ENCODE measurements at regions of chr2 and their contacts with region 1.

Region 1: DNA sequence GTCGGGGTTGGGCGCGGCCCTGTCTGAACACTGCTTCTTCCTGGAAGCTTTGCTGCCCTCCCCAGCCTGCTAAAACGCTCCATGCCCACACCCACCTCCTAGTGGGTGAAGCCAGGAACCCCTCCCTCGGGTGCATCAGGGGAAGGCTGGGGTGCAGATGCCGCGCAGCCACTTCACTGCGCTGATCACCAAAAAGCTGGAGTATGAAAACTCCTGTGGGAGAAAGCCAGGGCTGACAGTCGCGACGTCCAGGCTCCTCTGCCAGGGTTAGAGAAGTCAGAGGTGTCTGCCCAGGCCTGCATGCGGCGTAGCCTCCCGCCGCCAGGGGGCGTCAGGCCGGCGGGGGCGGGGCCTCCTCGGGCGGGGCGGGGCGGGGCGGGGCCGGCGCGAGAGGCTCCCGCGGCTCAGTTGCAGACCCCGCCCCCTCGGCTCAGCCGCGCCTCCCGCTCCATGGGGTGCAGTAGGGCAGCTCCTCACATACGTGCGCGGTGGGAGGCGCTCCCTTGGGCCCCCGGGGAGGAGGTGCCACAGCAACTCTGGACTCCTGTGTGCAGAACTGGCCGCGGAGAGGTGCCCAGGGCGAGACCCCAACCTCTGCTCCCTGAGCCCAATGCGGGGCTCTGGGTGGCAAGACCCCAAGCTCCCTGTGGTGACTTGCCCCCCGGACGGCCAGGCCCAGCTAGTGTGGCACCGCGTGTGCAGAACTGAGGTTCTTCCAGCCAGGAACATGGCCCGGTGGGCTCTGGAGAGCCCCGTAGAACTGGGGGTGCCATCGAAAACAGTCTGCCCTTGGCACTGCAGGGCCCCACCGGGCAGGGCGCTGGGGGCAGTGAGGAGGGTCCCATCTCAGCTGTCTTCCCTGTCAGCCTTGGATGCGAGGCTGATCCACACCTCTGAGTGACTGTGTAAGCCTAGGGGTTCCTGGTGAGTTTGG is 1.8 kb upstream of the RNPEPL1 start:
- DNase-seq: peak; percentile 96
- H3K4me3 Mint-ChIP-seq: peak overlapping the region; percentile 92
- H3K27ac Mint-ChIP-seq: peak overlapping the region; percentile 99
- H3K4me1 Mint-ChIP-seq: peaks cover 66% of the 10 kb centered on the region
- H3K27me3 Mint-ChIP-seq: no peaks in the 10 kb centered on the region

Region 2: GRCh38 chr2:240434728-240435456 is 131.6 kb before region 1 on chr2:
- CTCF ChIA-PET with region 1: no interaction called
- intact Hi-C with region 1: loop called (anchors 5 kb)
- DNase-seq: peak; percentile 88
- H3K4me3 Mint-ChIP-seq: peak overlapping the region; percentile 74
- H3K27ac Mint-ChIP-seq: no peak overlapping the region
- H3K4me1 Mint-ChIP-seq: peaks cover 8% of the 10 kb centered on the region
- H3K27me3 Mint-ChIP-seq: peaks cover 20% of the 10 kb centered on the region

Region 3: GRCh38 chr2:240579771-240580614 is 13.5 kb after region 1 on chr2:
- CTCF ChIA-PET with region 1: interaction called, 21 read pairs
- intact Hi-C with region 1: loop called (anchors 1 kb)
- DNase-seq: peak; percentile 83
- H3K4me3 Mint-ChIP-seq: no peak overlapping the region
- H3K27ac Mint-ChIP-seq: peak overlapping the region; percentile 84
- H3K4me1 Mint-ChIP-seq: peaks cover 36% of the 10 kb centered on the region
- H3K27me3 Mint-ChIP-seq: no peaks in the 10 kb centered on the region

Region 4: GRCh38 chr2:240593026-240593702 is 26.7 kb after region 1 on chr2:
- CTCF ChIA-PET with region 1: no interaction called
- intact Hi-C with region 1: no loop called
- DNase-seq: no peak
- H3K4me3 Mint-ChIP-seq: no peak overlapping the region
- H3K27ac Mint-ChIP-seq: no peak overlapping the region
- H3K4me1 Mint-ChIP-seq: peaks cover 11% of the 10 kb centered on the region
- H3K27me3 Mint-ChIP-seq: no peaks in the 10 kb centered on the region

Region 5: GRCh38 chr2:240624950-240625621 is 58.6 kb after region 1 on chr2 and contains the start of gene GPR35:
- CTCF ChIA-PET with region 1: interaction called, 3 read pairs
- intact Hi-C with region 1: loop called (anchors 1 kb)
- DNase-seq: peak; percentile 86
- H3K4me3 Mint-ChIP-seq: peak within 1 kb of the TSS; percentile 42
- H3K27ac Mint-ChIP-seq: peak within 1 kb of the TSS; percentile 47
- H3K4me1 Mint-ChIP-seq: peaks cover 51% of the 10 kb centered on the region
- H3K27me3 Mint-ChIP-seq: no peaks in the 10 kb centered on the region
- total RNA-seq, gene GPR35: 2.5 to 2.6 TPM

Region 6: DNA sequence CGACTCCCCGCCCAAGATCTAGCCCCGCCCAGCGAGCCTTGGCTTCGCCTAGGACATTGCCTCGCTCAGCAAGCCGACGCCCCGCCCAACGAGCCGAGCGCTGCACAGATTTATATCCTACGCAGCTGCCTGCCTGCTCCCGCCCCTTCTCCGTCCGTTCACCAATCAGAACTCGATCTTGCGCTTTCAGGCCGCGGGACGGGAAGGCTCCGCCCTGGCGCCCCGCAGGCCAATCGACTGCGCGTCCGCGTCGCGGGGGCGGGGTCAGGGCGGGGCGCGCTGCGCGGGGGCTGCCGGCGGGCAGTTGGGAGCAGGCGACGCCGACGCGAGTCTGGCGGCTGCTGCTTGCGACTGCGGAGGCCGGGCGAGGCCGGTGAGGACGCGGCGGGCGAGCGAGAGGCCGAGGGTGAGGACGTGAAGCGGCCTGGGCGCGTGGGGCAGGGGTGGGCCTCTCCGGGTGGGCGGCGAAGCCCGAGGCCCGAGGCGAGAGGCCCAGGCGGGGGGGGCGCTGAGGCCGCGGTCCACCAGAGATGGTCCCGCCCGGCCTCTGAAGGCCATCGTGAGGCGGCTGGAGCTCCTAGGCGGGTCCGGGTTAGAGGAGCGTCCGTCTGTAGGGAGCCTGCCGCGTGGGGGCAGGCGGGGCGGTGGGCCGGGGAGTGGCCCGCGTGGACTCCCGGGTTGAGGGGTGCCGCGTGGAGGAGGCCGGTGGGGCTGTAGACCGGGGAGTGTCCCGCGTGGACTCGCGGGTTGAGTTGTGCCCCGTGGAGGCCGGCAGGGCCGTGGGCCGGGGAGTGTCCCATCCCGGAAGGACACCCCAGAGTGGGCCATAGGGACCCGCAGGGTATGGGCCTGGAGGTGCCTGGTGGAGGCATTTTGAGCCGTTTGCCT is 789.8 kb after region 1 on chr2 and contains the start of gene FARP2:
- CTCF ChIA-PET with region 1: no interaction called
- intact Hi-C with region 1: loop called (anchors 5 kb)
- DNase-seq: peak; percentile 99
- H3K4me3 Mint-ChIP-seq: peak within 1 kb of the TSS; percentile 78
- H3K27ac Mint-ChIP-seq: peak within 1 kb of the TSS; percentile 76
- H3K4me1 Mint-ChIP-seq: peaks cover 27% of the 10 kb centered on the region
- H3K27me3 Mint-ChIP-seq: no peaks in the 10 kb centered on the region
- total RNA-seq, gene FARP2: 19.5 to 19.6 TPM

Measured in activated naive CD4-positive, alpha-beta T cell treated with anti-CD3 and anti-CD28 coated beads for 36 hours (primary cell).